Posterior cingulate gyrus (tissue), 11 donors: ENCODE measurements at regions of chr10 and their contacts with region 1.

Region 1: DNA sequence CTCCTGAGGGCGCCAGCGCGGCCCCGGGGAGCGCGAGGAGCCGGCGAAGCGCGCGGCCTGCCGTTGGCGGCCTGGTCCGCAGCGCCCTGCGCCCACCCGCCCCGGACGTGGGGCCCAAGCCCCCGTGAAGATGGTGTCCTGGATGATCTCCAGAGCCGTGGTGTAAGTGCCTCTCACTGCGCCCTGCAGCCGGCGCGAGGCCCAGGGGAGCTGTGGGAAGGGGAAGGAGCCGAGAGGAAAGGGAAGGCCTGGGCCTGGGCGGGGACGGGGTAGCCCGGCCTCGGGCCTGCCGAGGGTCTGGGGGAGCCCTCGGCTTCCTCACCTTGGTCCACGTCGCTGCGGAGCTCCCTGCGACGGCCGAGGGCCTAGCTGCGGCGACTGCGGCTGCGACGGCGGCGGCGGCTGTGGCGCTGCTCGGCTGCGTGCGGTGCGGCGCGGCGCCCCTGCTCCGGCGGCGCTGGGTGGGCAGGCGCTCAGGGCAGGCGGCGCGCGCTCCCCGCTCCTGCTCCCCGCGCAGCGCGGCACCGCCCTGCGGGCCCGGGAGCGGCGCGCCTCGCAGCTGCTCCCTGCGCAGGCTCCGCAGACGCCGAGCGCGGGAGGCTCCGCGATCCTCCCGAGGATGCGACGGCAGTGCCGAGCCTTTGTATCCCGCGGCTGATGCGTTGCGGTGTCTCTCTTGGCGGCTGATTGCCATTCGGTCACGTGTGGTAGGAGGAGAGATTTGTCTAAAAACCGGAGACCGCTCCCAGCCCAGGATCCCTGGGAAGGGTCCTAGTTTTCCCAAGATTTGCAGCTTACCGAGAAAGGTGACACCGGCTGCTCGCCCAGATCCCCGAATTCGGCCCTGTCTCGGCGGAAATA is 445 bp downstream of the REEP3 start:
- DNase-seq: peak; percentile 57 to 96 (median 72)

Region 2: DNA sequence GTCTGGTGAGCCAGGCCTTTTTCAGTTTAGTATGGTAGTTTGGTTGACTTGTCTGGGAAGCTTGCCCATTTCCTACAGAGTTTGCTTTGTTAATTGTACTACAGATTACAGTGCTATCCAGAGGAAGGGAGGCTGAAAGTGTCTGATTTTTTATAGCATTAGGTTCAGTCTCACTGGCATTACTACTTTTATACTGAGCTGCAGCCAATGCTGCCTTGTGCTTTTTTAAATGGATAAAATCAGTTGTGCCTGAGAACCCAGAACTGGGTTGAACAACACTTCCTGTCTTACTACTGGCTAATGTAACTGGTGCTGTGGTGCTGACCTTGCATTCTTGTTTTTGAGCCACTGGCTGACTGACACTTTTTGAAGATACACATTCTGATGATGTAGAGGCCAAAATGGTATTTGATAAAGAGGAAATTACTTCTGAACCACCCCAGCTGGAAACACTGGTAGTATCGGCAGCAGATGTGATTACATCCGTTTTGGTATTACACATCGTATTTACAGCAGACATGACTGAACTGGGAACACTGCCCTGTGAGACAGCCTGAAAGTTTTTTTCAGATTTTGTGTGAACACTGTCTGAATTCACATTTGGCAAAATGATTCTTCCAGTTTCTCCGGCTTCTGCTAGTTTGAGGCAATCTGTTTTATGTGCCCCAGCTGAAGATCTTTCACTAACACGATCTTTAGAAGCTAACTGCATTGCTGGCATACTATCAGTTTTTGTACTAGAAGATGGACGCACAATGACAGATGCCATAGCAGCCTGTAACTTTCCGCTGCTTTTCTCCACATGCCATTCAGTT is 314.4 kb before region 1 on chr10:
- intact Hi-C with region 1: loop called (anchors 5 kb)
- DNase-seq: peak in 1 of 10 donors; percentile 18

Region 3: GRCh38 chr10:63268798-63269503 is 252.7 kb before region 1 on chr10:
- intact Hi-C with region 1: loop called (anchors 2 kb)
- DNase-seq: peak in 9 of 10 donors; percentile 16 to 92 (median 59)

Region 4: GRCh38 chr10:63465293-63466143 is 56.1 kb before region 1 on chr10 and contains the start of gene JMJD1C:
- intact Hi-C with region 1: loop called (anchors 1 kb)
- DNase-seq: peak; percentile 56 to 95 (median 70)

Region 5: GRCh38 chr10:63711867-63712716 is 190.4 kb after region 1 on chr10:
- intact Hi-C with region 1: loop called (anchors 10 kb)
- DNase-seq: peak; percentile 51 to 93 (median 63)

Region 6: DNA sequence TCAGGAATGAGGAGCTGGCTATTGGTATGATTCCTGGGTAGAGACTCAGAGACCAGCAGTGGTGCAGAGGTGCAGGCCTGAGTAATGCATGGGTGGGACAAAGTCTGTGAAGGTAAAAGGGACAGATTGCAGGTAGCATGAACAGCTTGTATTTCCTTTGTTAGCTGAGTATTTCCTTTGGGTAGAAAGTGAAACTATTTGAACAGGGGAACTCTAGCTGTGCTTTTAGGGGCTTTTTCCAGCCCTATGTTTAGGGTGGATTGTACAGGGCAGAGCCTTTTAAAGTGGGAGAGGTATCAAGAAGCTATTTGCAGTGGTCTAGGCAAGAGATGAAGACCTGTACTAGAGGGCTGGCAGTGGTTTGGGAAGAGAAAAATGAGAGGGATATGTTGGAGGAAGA is 739.4 kb after region 1 on chr10:
- intact Hi-C with region 1: no loop called
- DNase-seq: no peak